K562 (cell line): ENCODE measurements at regions of chr15 and their contacts with region 1.

Region 1: GRCh38 chr15:90886041-90886614 is 1.8 kb downstream of the FES start:
- DNase-seq: peak; percentile 76 to 84 (median 78)
- ATAC-seq: peak; percentile 79
- H3K4me3 ChIP-seq: no peak overlapping the region
- H3K27ac ChIP-seq: no peak overlapping the region; the same call in 2 of the 3 replicates
- H3K4me1 ChIP-seq: peaks cover 10 to 74% of the 10 kb centered on the region in 2 experiments; a peak in 4 of 5 replicates
- H3K27me3 ChIP-seq: no peaks in the 10 kb centered on the region
- CTCF ChIP-seq: peak; percentile 94 to 99 (median 96)
- EP300 ChIP-seq: no peak
- POLR2A ChIP-seq: no peak
- RAD21 ChIP-seq: peak; percentile 98 to 99

Region 2: DNA sequence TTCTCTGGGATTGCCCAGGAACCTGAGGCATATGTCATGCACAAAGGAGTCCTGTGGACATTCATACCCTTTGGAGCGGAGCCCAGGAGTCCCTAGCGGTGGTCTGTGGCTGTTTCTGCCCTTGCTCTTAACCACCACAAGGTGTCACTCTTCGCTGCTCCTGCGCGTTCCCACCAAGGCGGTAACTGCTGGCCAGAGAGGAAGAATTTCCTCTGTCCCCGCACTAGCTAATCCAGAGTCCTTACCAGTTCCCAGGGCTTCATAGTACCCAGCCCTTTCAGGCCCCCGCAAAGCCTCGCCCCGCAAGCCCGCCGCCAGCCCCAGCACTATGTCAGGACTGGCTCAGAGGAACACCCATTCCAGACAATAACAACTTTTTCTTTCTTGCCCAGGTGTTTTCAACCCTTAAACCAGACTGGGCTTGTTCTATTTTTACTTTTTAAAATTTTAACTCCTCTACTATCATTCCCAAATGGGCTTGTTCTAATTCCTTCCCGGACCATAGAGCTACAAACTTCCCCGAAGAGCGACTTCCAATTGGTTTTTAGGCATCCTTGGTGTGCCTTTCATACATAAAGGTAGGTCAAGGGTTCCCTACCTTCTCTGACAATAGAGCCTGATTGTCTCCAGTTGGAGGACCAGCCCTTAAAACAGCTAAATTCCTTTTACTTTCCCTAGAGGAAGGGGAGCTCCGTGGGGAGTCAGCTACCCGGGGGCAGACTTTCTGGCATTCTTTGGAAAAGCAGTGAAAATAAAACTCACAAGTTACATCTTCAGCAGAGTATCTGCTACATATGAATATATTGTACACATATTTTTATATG is 565.9 kb before region 1 on chr15:
- CTCF ChIA-PET with region 1: interaction called, 9 read pairs
- POLR2A ChIA-PET with region 1: interaction called, 4 read pairs
- in situ Hi-C with region 1: loop called (anchors 10 kb)
- intact Hi-C with region 1: loop called (anchors 10 kb)
- DNase-seq: peak; percentile 85 to 92 (median 86)
- ATAC-seq: peak; percentile 100
- H3K4me3 ChIP-seq: no peak overlapping the region
- H3K27ac ChIP-seq: peak overlapping the region; percentile 21; the same call in 2 of the 3 replicates
- H3K4me1 ChIP-seq: peaks cover 3 to 4% of the 10 kb centered on the region in 2 experiments; a peak in 2 of 5 replicates
- H3K27me3 ChIP-seq: no peaks in the 10 kb centered on the region
- CTCF ChIP-seq: peak; percentile 99
- EP300 ChIP-seq: no peak
- POLR2A ChIP-seq: no peak
- RAD21 ChIP-seq: peak; percentile 97 to 98

Region 3: DNA sequence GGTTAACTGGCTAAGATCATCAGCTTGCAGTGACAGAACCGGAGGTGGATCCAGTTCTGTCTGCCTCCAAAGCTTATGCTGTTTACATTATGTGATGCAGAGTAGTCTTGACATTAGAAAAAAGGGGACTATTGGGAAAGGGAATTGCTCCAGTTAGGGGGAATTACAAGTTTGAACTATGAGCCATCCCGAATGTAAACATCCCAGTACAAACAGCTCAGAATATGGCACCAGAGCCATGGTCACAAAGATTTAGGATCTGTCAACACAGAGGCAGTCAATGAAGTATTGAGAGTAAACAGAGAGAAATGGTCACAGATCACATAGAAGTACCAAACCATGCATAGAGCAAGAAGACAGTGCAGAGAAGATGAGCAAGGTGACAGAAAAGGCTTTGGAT is 396.2 kb before region 1 on chr15:
- CTCF ChIA-PET with region 1: interaction called, 4 read pairs
- POLR2A ChIA-PET with region 1: no interaction called
- in situ Hi-C with region 1: loop called (anchors 5 kb)
- intact Hi-C with region 1: no loop called
- DNase-seq: no peak
- ATAC-seq: no peak
- H3K4me3 ChIP-seq: no peak overlapping the region
- H3K27ac ChIP-seq: no peak overlapping the region
- H3K4me1 ChIP-seq: peaks cover 0 to under 1% of the 10 kb centered on the region in 2 experiments; a peak in 1 of 5 replicates
- H3K27me3 ChIP-seq: no peaks in the 10 kb centered on the region
- CTCF ChIP-seq: no peak
- EP300 ChIP-seq: no peak
- POLR2A ChIP-seq: no peak
- RAD21 ChIP-seq: no peak

Region 4: GRCh38 chr15:90691982-90692773 is 193.9 kb before region 1 on chr15:
- CTCF ChIA-PET with region 1: no interaction called
- POLR2A ChIA-PET with region 1: no interaction called
- in situ Hi-C with region 1: no loop called
- intact Hi-C with region 1: loop called (anchors 5 kb)
- DNase-seq: no peak
- ATAC-seq: no peak
- H3K4me3 ChIP-seq: no peak overlapping the region
- H3K27ac ChIP-seq: no peak overlapping the region
- H3K4me1 ChIP-seq: no peaks in the 10 kb centered on the region; a peak in 1 of 5 replicates
- H3K27me3 ChIP-seq: no peaks in the 10 kb centered on the region
- CTCF ChIP-seq: no peak
- EP300 ChIP-seq: no peak
- POLR2A ChIP-seq: no peak
- RAD21 ChIP-seq: no peak

Region 5: DNA sequence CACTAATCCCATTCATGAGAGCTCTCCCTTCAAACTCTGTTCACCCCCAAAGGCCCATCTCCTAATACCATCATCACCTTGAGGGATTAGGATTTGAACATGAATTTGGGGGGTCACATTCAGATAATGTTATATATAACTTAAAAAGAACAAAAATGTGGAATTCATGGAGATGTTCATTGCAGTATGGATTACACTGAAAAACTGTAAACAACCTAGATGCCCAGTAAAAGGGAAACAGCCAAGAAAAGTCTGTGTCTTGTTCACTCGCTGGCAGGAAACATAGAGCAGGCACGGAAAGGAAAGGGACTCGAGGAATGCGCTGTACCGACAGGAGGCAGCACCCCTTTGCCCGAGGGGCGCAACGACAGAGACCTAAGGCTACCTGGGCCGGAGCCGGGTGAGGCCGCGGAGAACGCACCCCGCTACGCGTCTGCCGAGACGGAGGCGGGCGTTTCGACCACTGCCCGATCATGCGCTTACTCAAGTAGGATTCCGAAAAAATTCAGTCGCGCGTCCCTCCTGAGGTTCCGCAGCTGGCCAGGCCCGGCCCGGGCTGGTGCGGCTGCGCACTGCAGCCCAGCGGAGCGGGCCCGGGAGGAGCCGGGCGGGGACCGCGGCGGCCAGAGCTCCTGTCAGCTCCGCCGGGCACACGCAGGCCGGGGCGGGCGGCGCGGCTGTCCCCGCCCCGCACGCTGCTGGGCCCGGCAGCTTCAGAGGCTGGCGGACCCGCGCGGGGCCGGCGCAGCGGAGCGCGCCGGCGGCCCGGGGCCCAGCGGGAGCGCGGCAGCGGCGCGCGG is 16.1 kb after region 1 on chr15:
- CTCF ChIA-PET with region 1: no interaction called
- POLR2A ChIA-PET with region 1: interaction called, 12 read pairs
- in situ Hi-C with region 1: no loop called
- intact Hi-C with region 1: no loop called
- DNase-seq: peak; percentile 75 to 92 (median 90)
- ATAC-seq: peak; percentile 75
- H3K4me3 ChIP-seq: peak overlapping the region; percentile 69
- H3K27ac ChIP-seq: peak overlapping the region; percentile 99
- H3K4me1 ChIP-seq: peaks cover 28 to 69% of the 10 kb centered on the region in 2 experiments; a peak in 4 of 5 replicates
- H3K27me3 ChIP-seq: no peaks in the 10 kb centered on the region
- CTCF ChIP-seq: peak; percentile 61 to 77 (median 69)
- EP300 ChIP-seq: no peak
- POLR2A ChIP-seq: peak; percentile 73
- RAD21 ChIP-seq: peak in 1 of 2 experiments; percentile 45